ENCODE measurements at regions of chr11 and their contacts with region 1.

Region 1: DNA sequence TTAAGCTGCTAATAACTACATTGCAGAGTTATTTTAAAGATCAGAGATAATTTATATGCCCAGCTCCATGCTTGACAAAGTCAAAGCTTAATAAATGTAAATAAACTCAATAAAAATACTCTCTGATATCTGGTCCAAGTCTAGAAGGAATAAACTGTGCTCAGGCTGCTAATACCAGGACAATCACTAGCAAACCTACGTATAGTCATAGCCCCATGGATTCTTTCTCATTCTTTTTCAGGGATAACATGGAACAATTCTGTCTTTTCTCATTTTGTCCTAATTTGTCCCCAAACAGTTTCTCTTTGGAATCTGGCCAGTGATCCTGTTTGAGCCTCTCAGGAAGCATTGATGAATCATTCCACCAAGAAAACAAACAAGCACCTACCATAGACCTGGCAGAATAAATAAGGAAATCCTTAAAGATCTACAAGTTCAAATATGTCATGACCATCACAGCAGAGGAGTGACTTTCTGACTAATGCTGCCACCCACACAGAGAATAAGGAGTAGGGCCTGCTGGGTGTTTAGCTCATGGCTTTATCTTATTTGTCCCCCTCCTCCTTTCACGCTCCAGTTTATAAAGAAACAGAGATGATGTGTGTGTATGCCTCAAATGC is 14.1 kb upstream of the B3GNT6 start:
- DNase-seq: no peak
- H3K4me3 ChIP-seq: no peak overlapping the region
- CTCF ChIP-seq: no peak

Region 2: GRCh38 chr11:77039491-77040400 is 19.7 kb after region 1 on chr11:
- CTCF ChIA-PET with region 1: interaction called, 14 read pairs
- POLR2A ChIA-PET with region 1: no interaction called
- DNase-seq: no peak
- H3K4me3 ChIP-seq: peak overlapping the region; percentile 49
- CTCF ChIP-seq: peak; percentile 69

Measured in AG04449 (cell line).